CD8-positive, alpha-beta T cell (primary cell): ENCODE measurements at regions of chr14 and their contacts with region 1.

Region 1: GRCh38 chr14:49485290-49485689 is 100.9 kb downstream of the RPS29 start:
- DNase-seq: no peak
- ATAC-seq: no peak
- H3K4me3 ChIP-seq: no peak overlapping the region
- H3K4me3 Mint-ChIP-seq: no peak overlapping the region
- H3K27ac ChIP-seq: no peak overlapping the region
- H3K27ac Mint-ChIP-seq: no peak overlapping the region
- H3K4me1 ChIP-seq: no peaks in the 10 kb centered on the region
- H3K4me1 Mint-ChIP-seq: no peaks in the 10 kb centered on the region
- H3K27me3 ChIP-seq: no peaks in the 10 kb centered on the region
- H3K27me3 Mint-ChIP-seq: no peaks in the 10 kb centered on the region
- CTCF ChIP-seq: no peak

Region 2: GRCh38 chr14:49461529-49462401 is 23.5 kb before region 1 on chr14:
- CTCF ChIA-PET with region 1: interaction called, 11 read pairs
- POLR2A ChIA-PET with region 1: no interaction called
- intact Hi-C with region 1: no loop called
- DNase-seq: peak in 8 of 9 experiments; percentile 39 to 85 (median 54)
- ATAC-seq: peak; percentile 87
- H3K4me3 ChIP-seq: no peak overlapping the region
- H3K4me3 Mint-ChIP-seq: no peak overlapping the region
- H3K27ac ChIP-seq: no peak overlapping the region
- H3K27ac Mint-ChIP-seq: no peak overlapping the region
- H3K4me1 ChIP-seq: no peaks in the 10 kb centered on the region
- H3K4me1 Mint-ChIP-seq: no peaks in the 10 kb centered on the region
- H3K27me3 ChIP-seq: no peaks in the 10 kb centered on the region
- H3K27me3 Mint-ChIP-seq: peaks cover 3% of the 10 kb centered on the region
- CTCF ChIP-seq: peak; percentile 78

Region 3: DNA sequence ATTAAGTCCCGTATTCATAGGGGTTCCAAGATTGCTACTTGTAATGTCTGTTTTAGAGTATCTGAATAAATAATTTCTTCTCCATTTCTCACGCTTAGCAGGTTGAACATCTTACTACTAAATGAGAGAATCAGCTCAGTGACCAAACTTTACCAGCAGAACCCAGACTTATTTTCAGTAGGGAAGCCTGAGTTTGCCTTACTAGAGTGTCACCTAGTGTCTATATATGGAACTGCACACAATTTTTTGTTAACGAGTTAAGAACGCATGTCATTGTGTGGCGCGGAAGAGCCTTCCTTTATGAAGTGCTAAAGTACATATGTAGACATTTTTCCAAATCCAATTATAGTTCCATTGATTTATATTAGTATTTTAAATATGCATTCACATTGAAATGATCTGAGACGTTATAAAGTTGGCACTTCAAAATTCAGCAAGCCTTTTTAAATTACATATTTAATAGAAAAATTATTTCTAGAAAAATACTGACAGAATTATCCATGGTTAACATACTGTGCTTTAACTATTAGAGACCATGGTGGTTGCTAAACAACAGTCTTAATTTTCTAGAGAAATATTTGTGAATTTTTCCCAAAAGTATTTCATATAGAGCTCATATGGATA is 12.5 kb after region 1 on chr14:
- CTCF ChIA-PET with region 1: interaction called, 10 read pairs
- POLR2A ChIA-PET with region 1: no interaction called
- intact Hi-C with region 1: no loop called
- DNase-seq: peak in 3 of 9 experiments; percentile 5 to 70 (median 63)
- ATAC-seq: peak; percentile 82
- H3K4me3 ChIP-seq: no peak overlapping the region
- H3K4me3 Mint-ChIP-seq: no peak overlapping the region
- H3K27ac ChIP-seq: no peak overlapping the region
- H3K27ac Mint-ChIP-seq: no peak overlapping the region
- H3K4me1 ChIP-seq: no peaks in the 10 kb centered on the region
- H3K4me1 Mint-ChIP-seq: peaks cover 3% of the 10 kb centered on the region
- H3K27me3 ChIP-seq: peaks cover 0 to 4% of the 10 kb centered on the region in 2 experiments
- H3K27me3 Mint-ChIP-seq: peaks cover 19% of the 10 kb centered on the region
- CTCF ChIP-seq: peak; percentile 89